ENCODE measurements at regions of chr6 and their contacts with region 1.

Region 1: DNA sequence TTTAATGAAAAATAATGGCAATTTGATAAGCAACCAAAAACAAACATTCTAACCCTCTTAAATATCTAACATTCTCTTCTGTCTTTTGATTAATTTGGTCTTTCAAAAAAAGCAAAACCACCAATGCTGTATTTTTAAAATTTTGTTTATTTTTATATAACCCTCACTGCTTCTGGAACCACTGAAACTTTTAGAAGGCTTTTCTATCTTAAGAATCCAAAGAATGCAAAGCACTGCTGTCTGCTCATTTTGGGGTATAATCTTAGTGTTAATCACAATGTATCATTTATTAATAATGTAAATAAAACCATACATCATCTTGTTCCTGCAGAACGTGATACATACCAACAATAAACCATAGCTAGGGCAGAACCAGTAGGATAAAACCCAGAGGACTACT is 14.0 kb downstream of the STK38 start:
- DNase-seq: peak; percentile 34
- ATAC-seq: peak; percentile 88
- H3K4me3 ChIP-seq: no peak overlapping the region
- H3K27ac ChIP-seq: no peak overlapping the region
- H3K4me1 ChIP-seq: peaks cover 3% of the 10 kb centered on the region
- H3K27me3 ChIP-seq: no peaks in the 10 kb centered on the region
- CTCF ChIP-seq: no peak
- POLR2A ChIP-seq: no peak
- RAD21 ChIP-seq: no peak

Region 2: DNA sequence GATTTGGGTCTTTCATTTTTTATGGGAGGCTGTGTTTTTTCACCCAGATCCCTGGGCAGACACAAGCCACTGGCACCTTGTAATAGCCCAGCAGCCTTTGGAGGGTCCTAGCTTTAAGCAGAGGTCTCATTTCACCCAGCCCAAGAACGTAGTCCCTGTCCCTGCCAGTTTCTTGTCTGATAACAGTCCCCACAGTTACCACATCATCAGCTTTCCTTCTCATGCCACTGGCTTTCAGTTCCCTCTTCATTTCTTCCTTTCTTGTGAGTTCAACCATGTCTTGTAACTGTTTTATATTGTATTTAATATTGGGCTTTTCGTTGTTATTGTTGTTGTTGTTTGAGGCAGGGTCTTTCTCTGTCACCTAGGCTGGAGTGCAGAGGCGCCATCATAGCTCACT is 252.9 kb before region 1 on chr6:
- CTCF ChIA-PET with region 1: no interaction called
- POLR2A ChIA-PET with region 1: no interaction called
- dilution Hi-C with region 1: no loop called
- in situ Hi-C with region 1: no loop called
- intact Hi-C with region 1: no loop called
- DNase-seq: no peak
- ATAC-seq: no peak
- H3K4me3 ChIP-seq: no peak overlapping the region
- H3K27ac ChIP-seq: no peak overlapping the region
- H3K4me1 ChIP-seq: no peaks in the 10 kb centered on the region
- H3K27me3 ChIP-seq: peaks cover 73% of the 10 kb centered on the region
- CTCF ChIP-seq: no peak
- POLR2A ChIP-seq: no peak
- RAD21 ChIP-seq: no peak

Region 3: DNA sequence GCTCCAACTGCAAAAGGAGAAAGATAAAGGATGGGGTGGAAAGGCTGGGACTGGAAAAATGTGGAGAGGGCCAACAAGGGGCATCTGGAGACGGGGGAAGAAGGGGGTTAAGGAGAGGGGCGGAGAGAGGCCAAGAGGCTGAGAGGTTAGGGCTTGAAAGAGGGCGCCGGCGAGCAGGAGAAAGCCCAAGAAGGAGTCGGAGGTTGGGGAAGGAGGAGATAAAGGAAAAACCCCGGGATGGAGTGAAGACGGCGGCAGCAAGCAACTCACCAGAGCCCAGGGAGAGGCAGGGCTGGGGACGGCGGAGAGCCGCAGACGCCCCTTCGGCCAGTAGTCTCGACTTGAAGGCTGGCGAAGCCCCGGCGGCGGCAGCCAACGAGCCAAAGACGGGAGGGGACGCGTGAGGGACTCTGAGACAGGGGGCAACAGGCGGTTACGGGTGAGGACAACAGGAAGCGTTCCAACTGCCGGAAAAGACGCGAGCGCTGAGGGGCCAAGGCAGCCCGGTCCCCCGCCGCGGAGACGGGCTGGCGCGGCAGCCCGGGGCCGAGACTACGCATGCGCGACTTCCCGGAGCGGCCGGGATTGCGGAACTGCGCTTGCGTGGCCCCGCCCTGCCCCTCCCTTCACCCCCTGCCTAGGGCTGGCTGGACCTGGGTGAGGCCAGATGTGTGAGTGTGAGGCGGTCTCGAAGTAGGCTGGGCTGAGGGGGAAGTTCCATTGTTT is 13.8 kb after region 1 on chr6 and contains the start of gene STK38:
- CTCF ChIA-PET with region 1: no interaction called
- POLR2A ChIA-PET with region 1: interaction called, 20 read pairs
- dilution Hi-C with region 1: no loop called
- in situ Hi-C with region 1: no loop called
- intact Hi-C with region 1: no loop called
- DNase-seq: peak; percentile 82
- ATAC-seq: peak; percentile 95
- H3K4me3 ChIP-seq: peak within 1 kb of the TSS; percentile 97
- H3K27ac ChIP-seq: peak within 1 kb of the TSS; percentile 98
- H3K4me1 ChIP-seq: peaks cover 6% of the 10 kb centered on the region; the same call in 1 of the 2 replicates
- H3K27me3 ChIP-seq: no peaks in the 10 kb centered on the region
- CTCF ChIP-seq: no peak
- POLR2A ChIP-seq: peak; percentile 58
- RAD21 ChIP-seq: no peak
- total RNA-seq, gene STK38: 9.7 and 10.6 TPM in 2 replicates

Region 4: DNA sequence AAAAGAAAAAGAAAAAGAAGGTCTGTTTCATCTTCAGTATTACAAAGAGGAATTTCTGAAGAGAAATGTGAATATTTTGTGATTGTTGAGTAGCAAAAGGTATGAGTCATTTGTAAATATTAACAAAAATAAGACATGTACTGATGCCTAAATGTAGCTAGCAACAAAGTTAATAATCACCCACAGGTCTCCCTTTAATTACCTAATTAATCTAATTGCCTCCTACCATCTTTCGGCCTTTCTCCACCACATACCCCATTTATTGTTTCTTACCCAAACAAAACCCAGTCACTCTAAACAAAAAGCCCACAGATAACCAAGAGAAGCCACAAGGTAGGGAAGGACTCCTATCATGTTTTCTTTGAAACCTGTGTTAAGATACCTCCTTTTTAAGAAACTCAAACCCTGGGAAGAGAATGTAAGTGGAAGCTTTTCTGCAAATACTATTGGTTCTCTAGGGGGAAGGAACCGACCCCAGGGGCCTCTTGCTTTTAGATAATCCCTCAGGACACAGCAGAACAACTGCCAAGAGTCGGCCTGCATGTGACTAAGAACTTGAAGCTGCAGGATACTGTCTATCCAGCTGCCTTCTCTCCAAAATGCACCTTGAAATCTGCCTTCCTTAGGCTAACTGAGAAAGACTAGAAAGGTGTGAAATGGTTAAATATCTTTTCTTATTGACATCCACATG is 30.1 kb after region 1 on chr6:
- CTCF ChIA-PET with region 1: no interaction called
- POLR2A ChIA-PET with region 1: no interaction called
- dilution Hi-C with region 1: no loop called
- in situ Hi-C with region 1: no loop called
- intact Hi-C with region 1: no loop called
- DNase-seq: peak; percentile 44
- ATAC-seq: peak; percentile 72
- H3K4me3 ChIP-seq: no peak overlapping the region
- H3K27ac ChIP-seq: no peak overlapping the region
- H3K4me1 ChIP-seq: peaks cover 4% of the 10 kb centered on the region; the same call in 1 of the 2 replicates
- H3K27me3 ChIP-seq: no peaks in the 10 kb centered on the region; the same call in 1 of the 2 replicates
- CTCF ChIP-seq: no peak
- POLR2A ChIP-seq: no peak
- RAD21 ChIP-seq: no peak

Region 5: GRCh38 chr6:36576561-36576960 is 43.2 kb after region 1 on chr6:
- CTCF ChIA-PET with region 1: no interaction called
- POLR2A ChIA-PET with region 1: no interaction called
- dilution Hi-C with region 1: no loop called
- in situ Hi-C with region 1: no loop called
- intact Hi-C with region 1: loop called (anchors 5 kb)
- DNase-seq: no peak
- ATAC-seq: no peak
- H3K4me3 ChIP-seq: no peak overlapping the region
- H3K27ac ChIP-seq: no peak overlapping the region
- H3K4me1 ChIP-seq: peaks cover 13% of the 10 kb centered on the region
- H3K27me3 ChIP-seq: no peaks in the 10 kb centered on the region
- CTCF ChIP-seq: no peak
- POLR2A ChIP-seq: no peak
- RAD21 ChIP-seq: no peak